ENCODE measurements at regions of chr22 and their contacts with region 1.

Region 1: DNA sequence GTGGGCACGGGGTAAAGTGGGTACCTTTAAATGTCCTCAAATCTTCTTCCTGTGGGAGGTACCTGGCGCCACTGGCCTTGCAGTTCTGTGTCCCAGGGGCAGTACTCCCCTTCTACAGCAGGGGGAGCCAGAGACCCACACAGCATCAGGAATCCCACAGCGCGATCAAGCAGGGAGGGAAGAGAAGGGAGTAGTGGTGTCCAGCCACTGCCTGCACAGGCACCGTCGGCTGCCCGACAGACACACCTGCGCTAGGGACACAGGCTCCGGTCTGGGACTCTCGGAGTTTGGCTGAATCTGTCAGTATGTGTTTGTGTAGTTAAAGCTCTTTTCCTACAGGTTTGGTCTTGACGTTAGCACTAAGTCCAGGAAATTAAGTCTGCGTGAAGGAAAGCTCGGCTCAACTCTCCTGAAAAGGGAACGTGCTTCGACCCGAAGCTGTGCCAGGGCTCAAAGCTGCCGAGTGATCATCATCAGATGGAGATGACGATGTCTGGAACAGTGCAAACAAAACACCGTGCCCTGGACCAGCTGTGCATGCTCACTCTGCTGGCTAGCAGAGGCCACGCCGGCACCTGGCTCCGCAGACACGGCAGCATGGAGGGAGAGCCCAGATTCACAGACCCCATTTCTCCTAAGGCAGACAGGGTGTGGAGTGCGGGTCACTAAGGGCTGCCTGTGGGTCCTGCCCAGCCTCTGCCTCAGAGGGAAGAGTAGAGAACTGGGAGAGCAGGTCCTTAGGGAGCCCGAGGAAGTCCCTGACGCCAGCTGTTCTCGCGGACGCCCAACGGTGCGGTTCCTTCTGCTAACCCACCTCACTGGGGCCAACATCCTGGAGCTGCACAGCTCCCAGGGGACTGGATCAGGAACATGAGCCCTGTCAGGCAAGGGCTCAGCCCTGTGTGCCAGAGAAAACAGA is 56.0 kb upstream of the BID start:
- DNase-seq: peak; percentile 79
- H3K4me3 ChIP-seq: no peak overlapping the region
- H3K27ac ChIP-seq: no peak overlapping the region
- H3K4me1 ChIP-seq: peaks cover 11% of the 10 kb centered on the region
- H3K27me3 ChIP-seq: no peaks in the 10 kb centered on the region
- CTCF ChIP-seq: peak; percentile 100

Region 2: GRCh38 chr22:17891481-17892167 is 61.3 kb after region 1 on chr22:
- CTCF ChIA-PET with region 1: no interaction called
- dilution Hi-C with region 1: no loop called
- in situ Hi-C with region 1: no loop called
- intact Hi-C with region 1: loop called (anchors 1 kb)
- DNase-seq: no peak
- H3K4me3 ChIP-seq: no peak overlapping the region
- H3K27ac ChIP-seq: no peak overlapping the region
- H3K4me1 ChIP-seq: peaks cover 12% of the 10 kb centered on the region
- H3K27me3 ChIP-seq: no peaks in the 10 kb centered on the region
- CTCF ChIP-seq: peak; percentile 36 to 68

Region 3: GRCh38 chr22:17903564-17904295 is 73.4 kb after region 1 on chr22:
- CTCF ChIA-PET with region 1: no interaction called
- dilution Hi-C with region 1: no loop called
- in situ Hi-C with region 1: loop called in 1 of 2 experiments (anchors 10 kb)
- intact Hi-C with region 1: no loop called
- DNase-seq: no peak
- H3K4me3 ChIP-seq: no peak overlapping the region
- H3K27ac ChIP-seq: no peak overlapping the region
- H3K4me1 ChIP-seq: no peaks in the 10 kb centered on the region
- H3K27me3 ChIP-seq: no peaks in the 10 kb centered on the region
- CTCF ChIP-seq: no peak

Region 4: GRCh38 chr22:18091916-18092526 is 261.7 kb after region 1 on chr22:
- CTCF ChIA-PET with region 1: no interaction called
- dilution Hi-C with region 1: no loop called
- in situ Hi-C with region 1: no loop called
- intact Hi-C with region 1: loop called (anchors 1 kb)
- DNase-seq: peak; percentile 69
- H3K4me3 ChIP-seq: peak overlapping the region; percentile 1 to 49 (median 28)
- H3K27ac ChIP-seq: peak overlapping the region; percentile 38
- H3K4me1 ChIP-seq: peaks cover 13% of the 10 kb centered on the region
- H3K27me3 ChIP-seq: no peaks in the 10 kb centered on the region
- CTCF ChIP-seq: peak; percentile 17 to 39